ENCODE measurements at regions of chr1 and their contacts with region 1.

Region 1: DNA sequence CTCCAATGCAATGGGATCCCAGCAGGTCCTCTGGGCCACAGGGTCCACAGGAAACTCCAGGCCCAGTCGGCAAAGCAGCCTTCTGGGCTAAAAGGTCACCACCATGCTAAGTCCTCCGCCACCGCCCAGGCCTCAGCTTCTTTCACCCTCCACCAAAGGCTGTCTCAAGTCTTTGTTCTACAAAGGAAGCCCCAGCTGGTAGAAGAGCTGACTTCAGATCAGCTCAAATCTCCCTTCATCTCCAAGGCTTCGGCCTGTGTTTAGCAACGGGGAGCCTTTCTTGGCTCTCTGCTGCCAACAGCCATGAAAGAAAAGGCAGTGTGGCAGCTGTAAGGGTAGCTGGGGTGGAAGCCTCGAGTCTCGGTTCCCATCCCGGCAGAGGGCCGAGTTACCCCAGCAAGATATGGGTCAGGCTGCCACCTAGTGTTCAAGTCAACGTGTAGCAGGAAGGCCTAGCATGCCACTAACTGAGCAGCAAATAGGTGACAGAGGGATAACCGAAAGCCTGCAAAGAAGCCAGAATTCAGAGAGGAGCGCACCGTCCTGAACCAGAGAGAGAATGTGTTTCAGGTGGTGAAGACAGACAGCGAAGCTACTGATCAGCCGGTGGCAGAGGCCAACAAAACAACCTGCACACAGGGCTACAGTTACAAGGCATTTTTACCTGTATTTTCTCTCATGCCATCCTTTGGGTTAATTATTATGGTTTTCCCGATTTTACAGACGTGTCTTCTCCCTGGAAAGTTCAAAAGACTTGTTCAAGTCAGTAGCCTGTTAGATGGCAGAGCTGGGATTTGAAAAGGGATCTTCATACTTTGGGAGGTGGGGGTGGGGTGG is 26.8 kb upstream of the CRNN start:
- DNase-seq: peak; percentile 63
- ATAC-seq: peak; percentile 99
- H3K4me3 ChIP-seq: no peak overlapping the region
- H3K27ac ChIP-seq: no peak overlapping the region
- H3K4me1 ChIP-seq: no peaks in the 10 kb centered on the region
- H3K27me3 ChIP-seq: 0 out of 2 replicates have a peak, but pooled peaks cover 3% of the 10 kb centered on the region
- CTCF ChIP-seq: peak; percentile 90

Region 2: DNA sequence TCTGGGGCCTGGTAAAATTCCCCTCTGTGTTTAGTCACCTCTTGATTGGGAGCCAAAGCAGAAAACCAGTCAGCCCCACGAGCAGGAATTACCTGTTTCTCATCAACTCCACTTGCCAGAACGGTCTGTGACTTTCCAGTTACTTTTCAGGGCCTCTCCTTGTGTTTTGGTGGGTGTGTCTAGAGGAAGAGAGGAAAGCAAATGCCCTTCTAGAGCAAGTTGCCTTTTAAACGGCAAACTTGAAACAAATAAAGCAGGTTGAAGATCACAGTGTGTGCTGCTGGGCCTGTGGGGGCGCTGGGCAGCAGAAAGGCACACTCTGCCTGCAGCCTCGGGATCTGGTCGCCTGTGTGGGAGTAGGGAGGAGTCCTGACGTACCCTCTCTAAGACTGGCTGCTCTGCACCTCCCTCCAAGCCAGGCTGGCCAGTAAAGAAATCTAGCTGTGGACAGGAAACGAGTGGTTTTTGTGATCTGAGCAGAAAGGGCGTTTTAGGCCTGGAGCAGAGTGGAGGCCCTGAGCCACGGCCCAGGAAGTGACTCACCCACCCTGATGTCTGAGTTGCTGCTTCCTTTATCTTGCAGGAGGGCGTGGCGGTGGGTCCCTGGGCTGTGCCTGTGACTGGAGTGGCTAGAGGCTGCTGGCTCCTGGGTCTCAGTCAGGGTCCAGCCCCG is 393.0 kb before region 1 on chr1:
- CTCF ChIA-PET with region 1: no interaction called
- POLR2A ChIA-PET with region 1: no interaction called
- in situ Hi-C with region 1: no loop called
- intact Hi-C with region 1: loop called (anchors 5 kb)
- DNase-seq: peak; percentile 96
- ATAC-seq: peak; percentile 97
- H3K4me3 ChIP-seq: peak overlapping the region; percentile 34 to 59
- H3K27ac ChIP-seq: peak overlapping the region; percentile 99
- H3K4me1 ChIP-seq: peaks cover 23% of the 10 kb centered on the region
- H3K27me3 ChIP-seq: no peaks in the 10 kb centered on the region
- CTCF ChIP-seq: peak; percentile 75

Region 3: GRCh38 chr1:152347116-152347728 is 93.6 kb before region 1 on chr1:
- CTCF ChIA-PET with region 1: no interaction called
- POLR2A ChIA-PET with region 1: no interaction called
- in situ Hi-C with region 1: no loop called
- intact Hi-C with region 1: loop called (anchors 5 kb)
- DNase-seq: peak; percentile 68
- ATAC-seq: peak; percentile 87
- H3K4me3 ChIP-seq: no peak overlapping the region
- H3K27ac ChIP-seq: no peak overlapping the region
- H3K4me1 ChIP-seq: no peaks in the 10 kb centered on the region
- H3K27me3 ChIP-seq: 0 out of 2 replicates have a peak, but pooled peaks cover 2% of the 10 kb centered on the region
- CTCF ChIP-seq: peak; percentile 86; the same call in 1 of the 2 replicates

Region 4: GRCh38 chr1:152398812-152399698 is 41.8 kb before region 1 on chr1:
- CTCF ChIA-PET with region 1: interaction called, 13 read pairs
- POLR2A ChIA-PET with region 1: no interaction called
- in situ Hi-C with region 1: no loop called
- intact Hi-C with region 1: loop called (anchors 5 kb)
- DNase-seq: no peak
- ATAC-seq: peak; percentile 94
- H3K4me3 ChIP-seq: no peak overlapping the region
- H3K27ac ChIP-seq: no peak overlapping the region
- H3K4me1 ChIP-seq: no peaks in the 10 kb centered on the region; the same call in 1 of the 2 replicates
- H3K27me3 ChIP-seq: 0 out of 2 replicates have a peak, but pooled peaks cover 4% of the 10 kb centered on the region
- CTCF ChIP-seq: peak; percentile 80

Measured in Panc1 (cell line).